Left ventricle myocardium inferior (tissue), 1 donor: ENCODE measurements at regions of chr10 and their contacts with region 1.

Region 1: DNA sequence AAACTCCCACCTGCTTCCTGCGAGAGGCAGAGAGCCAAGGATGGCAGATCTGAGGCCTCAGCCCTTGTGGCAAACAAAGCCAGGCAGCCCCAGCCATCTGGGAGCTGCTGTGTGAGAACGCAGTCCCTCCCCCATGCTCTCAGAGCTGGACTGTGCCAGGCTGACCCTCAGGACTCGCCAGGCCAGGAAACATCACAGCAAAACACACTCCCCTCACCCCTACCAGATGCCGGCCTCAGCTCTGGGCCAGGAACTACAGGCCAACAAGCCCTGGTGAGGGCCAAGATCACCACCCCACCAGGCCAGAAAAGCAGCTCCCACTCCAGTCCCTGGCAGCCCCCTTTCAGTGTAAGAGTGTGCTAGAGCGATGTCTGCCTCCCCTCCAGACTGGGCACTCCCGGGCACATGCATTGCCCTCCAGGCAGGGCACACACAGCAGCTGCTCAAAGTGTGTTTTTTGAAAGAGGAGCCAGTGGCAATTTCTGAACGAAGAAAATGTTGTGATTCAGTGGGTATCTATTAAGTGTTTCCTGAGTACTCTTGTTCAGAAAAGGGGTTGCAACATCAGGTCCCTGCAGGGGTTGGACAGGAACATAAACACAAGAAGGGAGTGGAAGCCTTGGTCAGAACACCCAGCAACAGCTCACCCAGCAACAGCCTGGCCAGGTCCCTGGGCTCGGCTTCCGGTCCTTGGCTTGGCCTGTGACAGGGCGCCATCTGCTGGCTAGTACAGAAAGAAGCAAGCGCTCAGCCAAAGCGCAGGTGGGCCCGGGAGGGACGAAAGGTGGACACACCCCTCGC is 18.3 kb downstream of the LRRC20 start:
- DNase-seq: peak; percentile 89
- H3K4me3 ChIP-seq: peak overlapping the region; percentile 5
- H3K27ac ChIP-seq: peak overlapping the region; percentile 78
- H3K4me1 ChIP-seq: peaks cover 17% of the 10 kb centered on the region
- H3K27me3 ChIP-seq: no peaks in the 10 kb centered on the region
- CTCF ChIP-seq: peak; percentile 95

Region 2: DNA sequence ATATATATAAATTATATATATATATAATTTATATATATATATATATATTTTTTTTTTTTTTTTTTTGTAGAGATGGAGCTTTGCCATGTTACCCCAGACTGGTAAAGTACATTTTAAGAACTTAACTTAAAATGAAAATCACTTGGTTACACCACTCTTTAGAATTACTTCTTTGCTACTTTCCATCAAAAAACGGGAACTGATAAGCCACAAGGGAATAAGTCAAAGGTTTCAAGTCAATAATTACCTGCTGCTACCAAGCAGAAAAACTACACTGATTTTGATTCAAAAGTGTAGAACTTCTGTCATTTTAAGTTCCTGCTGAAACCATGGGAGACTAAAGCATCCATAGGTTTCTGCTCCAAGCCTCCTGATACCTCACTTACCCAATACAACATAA is 143.1 kb before region 1 on chr10:
- intact Hi-C with region 1: loop called (anchors 5 kb)
- DNase-seq: no peak
- H3K4me3 ChIP-seq: peak overlapping the region; percentile 10
- H3K27ac ChIP-seq: peak overlapping the region; percentile 45
- H3K4me1 ChIP-seq: peaks cover 9% of the 10 kb centered on the region
- H3K27me3 ChIP-seq: no peaks in the 10 kb centered on the region
- CTCF ChIP-seq: no peak

Region 3: GRCh38 chr10:70250961-70251680 is 113.0 kb before region 1 on chr10:
- intact Hi-C with region 1: no loop called
- DNase-seq: no peak
- H3K4me3 ChIP-seq: no peak overlapping the region
- H3K27ac ChIP-seq: no peak overlapping the region
- H3K4me1 ChIP-seq: peaks cover 12% of the 10 kb centered on the region
- H3K27me3 ChIP-seq: peaks cover 46% of the 10 kb centered on the region
- CTCF ChIP-seq: no peak

Region 4: DNA sequence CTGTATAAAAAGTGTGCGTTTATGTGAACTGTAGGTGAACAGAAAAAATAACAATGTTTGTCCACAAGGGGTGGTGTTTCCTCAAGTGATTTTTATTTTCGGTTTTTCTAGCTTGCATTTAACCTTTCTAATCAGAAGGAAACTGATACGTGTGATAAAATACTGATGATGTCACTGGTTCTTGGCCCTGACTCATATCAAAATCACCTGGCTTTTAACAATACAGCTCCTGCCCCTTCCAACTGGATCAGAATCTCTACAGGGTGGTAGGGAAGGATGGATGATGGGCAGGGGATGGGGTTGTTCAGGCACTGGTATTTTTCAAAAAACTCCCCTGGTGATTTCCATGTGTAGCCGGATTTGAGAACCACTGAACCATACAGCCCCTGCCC is 91.2 kb before region 1 on chr10:
- intact Hi-C with region 1: loop called (anchors 5 kb)
- DNase-seq: no peak
- H3K4me3 ChIP-seq: no peak overlapping the region
- H3K27ac ChIP-seq: no peak overlapping the region
- H3K4me1 ChIP-seq: peaks cover 8% of the 10 kb centered on the region
- H3K27me3 ChIP-seq: no peaks in the 10 kb centered on the region
- CTCF ChIP-seq: peak; percentile 66